ENCODE measurements at regions of chr2 and their contacts with region 1.

Region 1: DNA sequence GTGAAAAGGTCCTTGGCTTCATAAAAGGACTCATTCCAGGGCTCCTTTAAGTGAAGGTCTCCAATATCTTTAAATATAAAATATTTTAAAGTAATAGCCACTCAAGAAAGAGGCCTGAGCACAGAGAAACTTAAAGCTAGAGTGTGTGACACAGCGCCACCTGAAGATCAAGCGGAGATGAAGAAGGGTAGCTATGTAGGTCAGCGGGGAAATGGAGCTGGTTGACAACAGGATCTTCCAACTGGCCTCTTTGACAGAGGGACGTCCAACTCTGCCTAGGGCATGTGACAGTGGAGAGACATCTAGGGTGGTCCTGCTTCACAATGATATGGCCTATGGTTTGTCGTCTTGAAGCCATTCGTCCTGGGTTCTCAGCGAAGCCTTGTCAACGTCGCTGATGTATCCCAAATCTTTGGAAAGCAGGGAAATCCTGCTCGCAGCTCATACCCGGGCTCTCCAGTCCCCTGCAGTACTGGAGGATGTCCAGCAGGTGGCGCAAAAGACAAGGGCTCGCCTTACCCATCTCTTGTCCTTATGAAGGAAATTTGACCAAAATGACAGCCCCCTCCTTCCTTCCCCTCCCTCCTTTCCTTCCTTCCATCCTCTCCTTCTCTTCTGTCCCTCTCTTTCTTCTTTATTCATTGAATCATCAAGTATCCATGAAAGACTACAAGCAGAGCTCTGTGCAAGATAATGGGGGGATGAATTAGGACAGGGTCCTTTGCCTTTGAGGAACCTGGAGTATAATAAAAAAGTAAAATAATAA is 59.6 kb downstream of the LONRF2 start:
- DNase-seq: peak; percentile 54
- ATAC-seq: peak; percentile 89
- H3K4me3 ChIP-seq: no peak overlapping the region
- H3K27ac ChIP-seq: no peak overlapping the region
- H3K4me1 ChIP-seq: 0 out of 4 replicates have a peak, but pooled peaks cover 0 to 6% of the 10 kb centered on the region in 2 experiments
- H3K27me3 ChIP-seq: no peaks in the 10 kb centered on the region
- CTCF ChIP-seq: peak; percentile 88 to 97 (median 94)
- POLR2A ChIP-seq: no peak
- RAD21 ChIP-seq: peak; percentile 98

Region 2: DNA sequence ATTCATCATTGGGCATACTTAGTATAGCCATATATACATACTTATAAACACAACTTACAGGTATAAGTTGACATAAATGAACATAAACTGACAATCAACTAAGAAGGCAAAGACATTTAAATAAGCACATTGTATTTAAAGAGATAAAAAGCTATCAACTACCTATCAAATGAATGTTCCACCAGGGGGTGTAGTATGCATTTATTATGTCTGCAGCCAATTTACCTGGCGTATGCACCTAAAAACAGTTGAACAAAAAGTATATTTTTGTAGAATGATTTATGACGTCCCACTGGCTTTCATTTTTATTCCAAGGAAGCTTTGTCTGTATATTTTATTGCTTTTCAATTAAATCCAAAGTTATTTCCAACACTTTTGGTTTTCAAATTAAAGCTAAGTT is 443.9 kb before region 1 on chr2:
- CTCF ChIA-PET with region 1: interaction called, 24 read pairs
- POLR2A ChIA-PET with region 1: no interaction called
- RAD21 ChIA-PET with region 1: interaction called in 1 of 2 experiments, 3 read pairs
- intact Hi-C with region 1: no loop called
- DNase-seq: peak; percentile 12
- ATAC-seq: no peak
- H3K4me3 ChIP-seq: no peak overlapping the region
- H3K27ac ChIP-seq: no peak overlapping the region
- H3K4me1 ChIP-seq: no peaks in the 10 kb centered on the region
- H3K27me3 ChIP-seq: peaks cover 49% of the 10 kb centered on the region
- CTCF ChIP-seq: peak; percentile 19 to 37 (median 37); a peak in 3 of 6 replicates
- POLR2A ChIP-seq: no peak
- RAD21 ChIP-seq: peak; percentile 51

Region 3: GRCh38 chr2:99883358-99883757 is 379.4 kb before region 1 on chr2:
- CTCF ChIA-PET with region 1: no interaction called
- POLR2A ChIA-PET with region 1: no interaction called
- RAD21 ChIA-PET with region 1: no interaction called
- intact Hi-C with region 1: no loop called
- DNase-seq: no peak
- ATAC-seq: no peak
- H3K4me3 ChIP-seq: no peak overlapping the region
- H3K27ac ChIP-seq: no peak overlapping the region
- H3K4me1 ChIP-seq: no peaks in the 10 kb centered on the region
- H3K27me3 ChIP-seq: peaks cover 88% of the 10 kb centered on the region
- CTCF ChIP-seq: no peak
- POLR2A ChIP-seq: no peak
- RAD21 ChIP-seq: no peak

Region 4: DNA sequence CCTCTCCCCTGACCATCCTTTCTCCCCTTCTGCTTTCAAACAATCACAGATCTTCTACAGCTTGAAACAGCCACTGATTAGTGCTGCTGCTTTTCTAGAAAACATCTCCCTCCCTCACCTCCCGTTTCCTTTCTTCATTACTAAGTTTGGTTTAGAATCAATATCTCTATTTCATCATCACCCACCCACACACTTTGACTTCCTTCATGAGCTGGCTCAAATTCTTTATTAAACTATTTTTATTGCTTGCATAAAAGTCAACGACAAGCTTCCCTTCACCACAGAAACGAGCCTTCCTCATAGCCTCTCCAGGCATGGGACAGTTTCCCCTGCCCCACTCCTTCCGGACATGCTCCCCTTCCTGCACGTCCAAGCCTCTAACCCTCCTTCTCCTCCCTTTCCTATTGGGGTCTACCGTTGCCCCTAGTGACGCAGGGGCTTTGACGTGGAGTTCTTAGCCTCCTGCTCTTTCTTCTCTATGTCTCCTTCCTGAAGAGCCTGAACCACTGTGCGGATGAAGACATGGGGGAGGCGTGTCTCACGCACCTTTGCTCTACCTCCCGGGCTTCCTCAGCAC is 292.4 kb before region 1 on chr2:
- CTCF ChIA-PET with region 1: no interaction called
- POLR2A ChIA-PET with region 1: no interaction called
- RAD21 ChIA-PET with region 1: no interaction called
- intact Hi-C with region 1: no loop called
- DNase-seq: no peak
- ATAC-seq: no peak
- H3K4me3 ChIP-seq: no peak overlapping the region
- H3K27ac ChIP-seq: no peak overlapping the region
- H3K4me1 ChIP-seq: no peaks in the 10 kb centered on the region
- H3K27me3 ChIP-seq: peaks cover 72% of the 10 kb centered on the region
- CTCF ChIP-seq: no peak
- POLR2A ChIP-seq: no peak
- RAD21 ChIP-seq: no peak

Region 5: DNA sequence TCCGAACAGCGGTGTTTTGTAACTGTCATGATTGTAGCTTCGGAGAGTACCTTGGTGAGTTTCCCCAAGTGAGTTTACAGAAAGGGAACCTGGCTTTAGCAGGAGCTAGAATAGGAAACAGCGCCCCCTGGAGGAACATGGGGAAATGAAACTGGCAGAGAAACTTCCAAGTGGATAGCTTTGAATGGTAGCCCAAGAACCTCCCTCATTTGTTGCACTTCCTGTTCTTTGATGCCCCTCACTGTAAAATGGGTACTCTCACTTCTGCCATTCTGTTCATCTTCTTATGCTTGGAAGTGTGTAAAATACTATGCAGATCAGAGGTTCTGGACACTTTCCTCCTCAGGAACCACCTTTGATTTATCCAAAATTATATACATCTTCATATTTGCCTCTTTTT is 118.5 kb after region 1 on chr2:
- CTCF ChIA-PET with region 1: interaction called, 147 read pairs
- POLR2A ChIA-PET with region 1: interaction called, 14 read pairs
- RAD21 ChIA-PET with region 1: interaction called, 26 to 37 read pairs
- intact Hi-C with region 1: loop called (anchors 1 kb)
- DNase-seq: peak; percentile 71
- ATAC-seq: peak; percentile 89
- H3K4me3 ChIP-seq: no peak overlapping the region
- H3K27ac ChIP-seq: no peak overlapping the region
- H3K4me1 ChIP-seq: peaks cover 0 to 7% of the 10 kb centered on the region in 2 experiments; a peak in 2 of 4 replicates
- H3K27me3 ChIP-seq: no peaks in the 10 kb centered on the region
- CTCF ChIP-seq: peak; percentile 86 to 93 (median 87); a peak in 5 of 6 replicates
- POLR2A ChIP-seq: no peak
- RAD21 ChIP-seq: peak; percentile 95

Region 6: GRCh38 chr2:100422320-100423055 is 159.8 kb after region 1 on chr2:
- CTCF ChIA-PET with region 1: interaction called, 29 read pairs
- POLR2A ChIA-PET with region 1: no interaction called
- RAD21 ChIA-PET with region 1: interaction called in 1 of 2 experiments, 5 read pairs
- intact Hi-C with region 1: loop called (anchors 2 kb)
- DNase-seq: peak; percentile 28
- ATAC-seq: peak; percentile 99
- H3K4me3 ChIP-seq: no peak overlapping the region
- H3K27ac ChIP-seq: no peak overlapping the region
- H3K4me1 ChIP-seq: no peaks in the 10 kb centered on the region; a peak in 1 of 4 replicates
- H3K27me3 ChIP-seq: no peaks in the 10 kb centered on the region
- CTCF ChIP-seq: peak; percentile 29 to 81 (median 66); a peak in 5 of 6 replicates
- POLR2A ChIP-seq: no peak
- RAD21 ChIP-seq: peak; percentile 38

Region 7: GRCh38 chr2:100562732-100563720 is 300.3 kb after region 1 on chr2 and contains the start of gene PDCL3:
- CTCF ChIA-PET with region 1: interaction called, 9 read pairs
- POLR2A ChIA-PET with region 1: no interaction called
- RAD21 ChIA-PET with region 1: no interaction called
- intact Hi-C with region 1: loop called (anchors 10 kb)
- DNase-seq: peak; percentile 97
- ATAC-seq: peak; percentile 91
- H3K4me3 ChIP-seq: peak within 1 kb of the TSS; percentile 82 to 86
- H3K27ac ChIP-seq: peak within 1 kb of the TSS; percentile 76
- H3K4me1 ChIP-seq: peaks cover 11 to 17% of the 10 kb centered on the region in 2 experiments; a peak in 3 of 4 replicates
- H3K27me3 ChIP-seq: no peaks in the 10 kb centered on the region
- CTCF ChIP-seq: peak in 1 of 3 experiments; percentile 27; a peak in 1 of 6 replicates
- POLR2A ChIP-seq: no peak
- RAD21 ChIP-seq: no peak
- total RNA-seq, gene PDCL3: 26.3 TPM

Measured in HCT116 (cell line).